Caco-2 (cell line): ENCODE measurements at regions of chrX and their contacts with region 1.

Region 1: DNA sequence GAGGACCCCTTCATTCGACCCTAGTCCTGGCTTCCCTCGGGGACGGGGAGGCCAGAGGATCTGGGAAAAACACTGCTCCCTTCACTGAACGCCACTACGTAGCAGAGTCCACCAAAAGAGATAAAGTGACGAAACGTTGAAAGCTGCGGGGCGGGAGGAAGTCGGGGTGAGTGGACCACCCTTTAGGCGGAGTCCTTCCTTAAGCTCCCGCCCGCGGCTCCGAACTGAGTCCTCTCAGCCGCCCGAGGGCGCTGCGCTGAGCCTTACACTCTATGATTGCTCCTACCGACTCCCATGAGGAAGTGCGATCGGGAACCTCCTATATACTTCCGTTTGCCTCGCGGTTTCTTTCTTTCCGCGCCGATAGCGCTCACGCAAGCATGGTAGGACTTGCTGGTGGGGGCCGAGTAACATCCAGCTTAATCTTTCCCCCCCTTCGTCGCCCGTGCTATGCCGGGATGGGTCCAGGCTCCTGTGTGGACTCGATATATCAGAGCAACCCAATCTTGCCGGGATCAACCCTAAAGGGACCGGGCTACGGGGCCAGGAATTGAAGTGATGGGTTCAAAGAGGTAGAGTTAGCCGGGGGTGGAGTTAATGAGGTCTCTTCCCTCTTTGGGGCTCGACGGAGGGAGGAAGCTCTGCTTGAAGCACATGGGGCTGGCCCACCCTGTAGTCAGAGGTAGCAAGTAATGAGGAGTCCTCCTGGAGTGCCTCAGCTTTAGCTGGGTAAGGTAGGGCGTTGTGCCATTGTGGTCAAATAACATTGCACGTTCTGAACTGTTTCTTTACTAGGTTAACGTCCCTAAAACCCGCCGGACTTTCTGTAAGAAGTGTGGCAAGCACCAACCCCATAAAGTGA is at the start of gene RPL36A:
- DNase-seq: peak; percentile 87 to 90
- H3K4me3 ChIP-seq: peak within 1 kb of the TSS; percentile 54
- H3K4me3 Mint-ChIP-seq: peak within 1 kb of the TSS; percentile 87
- H3K27ac Mint-ChIP-seq: peak within 1 kb of the TSS; percentile 96
- H3K4me1 ChIP-seq: no peaks in the 10 kb centered on the region
- H3K4me1 Mint-ChIP-seq: peaks cover 4% of the 10 kb centered on the region
- H3K27me3 ChIP-seq: no peaks in the 10 kb centered on the region
- H3K27me3 Mint-ChIP-seq: no peaks in the 10 kb centered on the region
- CTCF ChIP-seq: peak; percentile 33 to 77
- total RNA-seq, gene RPL36A: 377 and 381 TPM in 2 replicates

Region 2: DNA sequence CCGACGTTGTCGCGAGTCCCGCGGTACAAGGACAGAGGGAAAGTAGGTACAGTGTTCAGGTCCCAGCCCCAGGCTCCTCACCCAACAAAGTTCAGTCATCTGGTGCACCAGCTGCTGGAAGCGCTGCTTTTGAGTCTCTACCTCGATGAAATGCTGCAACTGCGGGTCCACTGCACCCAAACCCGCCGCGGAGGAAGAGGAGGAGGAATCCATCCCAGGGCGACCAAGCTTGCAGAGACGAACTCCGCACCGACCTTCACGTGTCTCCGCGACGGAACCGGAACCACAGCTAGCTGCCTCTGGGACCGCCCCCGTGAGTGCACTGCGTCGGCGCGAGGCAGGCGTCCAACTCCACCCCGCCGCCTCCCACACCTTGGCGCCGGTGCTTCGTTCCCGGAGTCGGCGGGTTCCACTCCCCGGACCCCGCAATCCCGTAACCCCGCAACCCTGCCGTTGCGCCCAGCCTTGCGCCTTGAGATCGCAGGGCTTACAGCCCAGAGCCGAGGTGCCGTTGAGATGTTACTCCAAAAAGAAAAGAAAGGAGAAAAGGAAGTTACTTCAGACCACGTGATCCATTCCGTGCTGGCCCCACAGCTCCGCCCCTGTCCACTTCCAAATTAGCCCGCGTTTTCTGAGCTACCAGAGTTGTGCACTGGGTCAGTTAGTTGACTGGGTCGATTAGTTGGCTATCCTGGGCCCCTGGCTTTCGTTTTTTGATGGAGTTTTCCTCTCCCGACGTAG is 42.3 kb before region 1 on chrX and contains the start of gene TIMM8A:
- CTCF ChIA-PET with region 1: interaction called, 3 read pairs
- POLR2A ChIA-PET with region 1: interaction called, 11 read pairs
- intact Hi-C with region 1: loop called (anchors 1 kb)
- DNase-seq: peak; percentile 68 to 78
- H3K4me3 ChIP-seq: peak within 1 kb of the TSS; percentile 86
- H3K4me3 Mint-ChIP-seq: peak within 1 kb of the TSS; percentile 82
- H3K27ac Mint-ChIP-seq: peak within 1 kb of the TSS; percentile 90
- H3K4me1 ChIP-seq: no peaks in the 10 kb centered on the region
- H3K4me1 Mint-ChIP-seq: no peaks in the 10 kb centered on the region
- H3K27me3 ChIP-seq: no peaks in the 10 kb centered on the region
- H3K27me3 Mint-ChIP-seq: no peaks in the 10 kb centered on the region
- CTCF ChIP-seq: no peak
- total RNA-seq, gene TIMM8A: 21.6 and 23.3 TPM in 2 replicates

Region 3: GRCh38 chrX:101407748-101408531 is 17.0 kb after region 1 on chrX and contains the starts of genes GLA and HNRNPH2:
- CTCF ChIA-PET with region 1: interaction called, 4 read pairs
- POLR2A ChIA-PET with region 1: interaction called, 5 read pairs
- intact Hi-C with region 1: loop called (anchors 1 kb)
- DNase-seq: peak; percentile 87 to 94
- H3K4me3 ChIP-seq: peak within 1 kb of the TSS; percentile 64
- H3K4me3 Mint-ChIP-seq: peak within 1 kb of the TSS; percentile 91
- H3K27ac Mint-ChIP-seq: peak within 1 kb of the TSS; percentile 95
- H3K4me1 ChIP-seq: no peaks in the 10 kb centered on the region
- H3K4me1 Mint-ChIP-seq: no peaks in the 10 kb centered on the region
- H3K27me3 ChIP-seq: no peaks in the 10 kb centered on the region
- H3K27me3 Mint-ChIP-seq: no peaks in the 10 kb centered on the region
- CTCF ChIP-seq: no peak
- total RNA-seq, gene GLA: 46.0 and 53.2 TPM in 2 replicates
- total RNA-seq, gene HNRNPH2: 46.1 TPM in 2 replicates